ENCODE measurements at regions of chr7 and their contacts with region 1.

Region 1: DNA sequence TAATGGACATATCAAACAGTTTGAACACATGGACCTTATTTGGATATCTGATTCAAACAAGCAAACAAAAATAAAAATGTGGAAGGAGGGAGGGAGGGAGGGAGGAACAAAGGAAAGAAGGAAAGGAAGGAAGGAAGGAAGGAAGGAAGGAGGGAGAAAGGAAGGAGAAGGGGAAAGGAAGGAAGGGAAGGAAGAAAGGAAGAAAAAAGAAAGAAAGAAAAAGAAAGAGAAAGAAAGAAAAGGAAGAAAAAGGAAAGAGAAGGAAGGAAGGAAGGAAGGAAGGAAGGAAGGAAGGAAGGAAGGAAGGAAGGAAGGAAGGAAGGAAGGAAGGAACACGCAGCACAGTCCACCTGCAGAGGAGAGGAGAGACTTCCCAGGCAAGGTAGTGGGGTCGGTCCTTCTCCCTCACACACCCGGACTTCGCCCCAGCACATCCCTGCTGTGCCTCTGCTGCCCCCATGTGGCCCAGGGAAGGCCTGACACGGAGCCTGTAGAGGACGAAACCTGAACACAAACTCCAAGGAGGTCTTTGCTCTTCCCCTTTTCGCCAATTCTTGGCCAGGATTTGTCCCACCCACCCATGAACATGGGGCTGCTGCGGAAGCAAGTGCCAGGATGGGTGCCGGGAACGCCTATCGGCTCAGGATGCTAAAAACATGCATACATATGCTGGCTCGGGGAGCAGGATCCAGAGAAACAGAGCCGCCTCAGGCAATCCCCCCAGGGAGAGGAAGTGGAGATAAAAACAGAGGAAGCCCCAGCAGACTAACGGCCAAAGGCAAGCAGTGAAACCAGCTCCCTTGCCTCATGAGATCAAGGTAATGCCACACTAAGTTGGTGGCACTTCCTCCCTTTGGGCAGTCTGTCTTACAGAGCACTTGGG is 52.3 kb upstream of the DGKI start:
- DNase-seq: peak; percentile 75
- ATAC-seq: peak; percentile 93
- H3K4me3 ChIP-seq: no peak overlapping the region
- H3K27ac ChIP-seq: no peak overlapping the region
- H3K4me1 ChIP-seq: no peaks in the 10 kb centered on the region; the same call in 1 of the 2 replicates
- H3K27me3 ChIP-seq: no peaks in the 10 kb centered on the region
- CTCF ChIP-seq: peak; percentile 85

Region 2: DNA sequence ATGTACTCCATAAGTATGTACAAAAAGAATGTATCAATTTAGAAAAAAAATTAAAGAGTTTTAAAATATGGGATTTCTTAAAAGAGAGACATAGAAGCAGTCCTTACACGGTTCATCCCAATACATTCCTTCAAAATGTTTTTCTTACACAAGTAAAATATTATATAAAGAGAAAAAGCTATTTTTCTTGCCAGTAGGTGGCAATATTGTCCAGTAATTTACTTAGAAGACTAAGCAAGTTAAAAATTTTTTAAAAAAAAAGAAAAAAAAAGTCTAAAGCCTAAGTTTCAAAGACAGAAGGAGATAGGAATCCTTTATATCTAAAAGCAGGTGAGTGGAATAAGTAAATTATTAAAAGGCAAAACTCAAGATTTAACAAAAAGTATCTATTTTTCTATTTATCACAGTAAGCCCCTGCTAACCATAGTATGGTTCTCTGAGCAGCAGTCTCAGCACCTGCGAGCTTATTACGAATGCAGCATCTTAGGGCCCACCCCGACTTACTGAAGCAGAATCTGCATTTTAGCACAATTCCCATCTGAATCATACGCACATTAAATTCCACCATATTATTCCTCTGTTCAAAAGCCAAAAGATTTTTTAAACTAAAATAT is 292.9 kb before region 1 on chr7:
- CTCF ChIA-PET with region 1: no interaction called
- POLR2A ChIA-PET with region 1: no interaction called
- intact Hi-C with region 1: loop called (anchors 1 kb)
- DNase-seq: peak; percentile 80
- ATAC-seq: no peak
- H3K4me3 ChIP-seq: no peak overlapping the region
- H3K27ac ChIP-seq: no peak overlapping the region
- H3K4me1 ChIP-seq: no peaks in the 10 kb centered on the region
- H3K27me3 ChIP-seq: peaks cover 73% of the 10 kb centered on the region
- CTCF ChIP-seq: peak; percentile 58; the same call in 1 of the 2 replicates

Region 3: DNA sequence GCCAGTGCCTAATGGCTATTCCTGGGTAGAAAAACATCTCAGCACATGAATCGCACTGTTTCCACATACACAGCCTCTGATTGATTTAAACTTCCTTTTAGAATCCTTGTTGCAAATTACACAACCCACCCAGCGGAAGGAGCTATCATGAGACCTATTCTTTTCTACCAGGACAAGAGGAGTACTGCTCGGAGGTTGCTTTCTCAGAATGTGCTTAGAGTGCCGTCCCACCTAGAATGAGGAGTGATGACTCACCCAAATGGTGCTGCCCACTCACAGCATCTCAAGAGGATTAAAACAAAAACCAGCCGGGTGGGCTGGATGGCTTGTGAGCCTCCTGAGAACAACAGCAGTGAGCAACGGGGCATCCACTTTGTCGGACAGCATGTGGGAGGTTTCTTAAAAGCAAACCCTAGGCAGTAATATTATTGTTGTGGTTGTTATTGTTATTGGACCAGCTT is 181.2 kb before region 1 on chr7:
- CTCF ChIA-PET with region 1: no interaction called
- POLR2A ChIA-PET with region 1: no interaction called
- intact Hi-C with region 1: no loop called
- DNase-seq: no peak
- ATAC-seq: no peak
- H3K4me3 ChIP-seq: no peak overlapping the region
- H3K27ac ChIP-seq: no peak overlapping the region
- H3K4me1 ChIP-seq: no peaks in the 10 kb centered on the region
- H3K27me3 ChIP-seq: peaks cover 86% of the 10 kb centered on the region
- CTCF ChIP-seq: no peak

Region 4: GRCh38 chr7:137816696-137817320 is 82.3 kb before region 1 on chr7:
- CTCF ChIA-PET with region 1: no interaction called
- POLR2A ChIA-PET with region 1: no interaction called
- intact Hi-C with region 1: loop called (anchors 2 kb)
- DNase-seq: peak; percentile 19
- ATAC-seq: no peak
- H3K4me3 ChIP-seq: no peak overlapping the region
- H3K27ac ChIP-seq: no peak overlapping the region
- H3K4me1 ChIP-seq: no peaks in the 10 kb centered on the region
- H3K27me3 ChIP-seq: peaks cover 53% of the 10 kb centered on the region
- CTCF ChIP-seq: peak; percentile 41; the same call in 1 of the 2 replicates

Region 5: GRCh38 chr7:138002096-138002827 is 103.2 kb after region 1 on chr7:
- CTCF ChIA-PET with region 1: interaction called, 8 read pairs
- POLR2A ChIA-PET with region 1: no interaction called
- intact Hi-C with region 1: loop called (anchors 1 kb)
- DNase-seq: peak; percentile 98
- ATAC-seq: peak; percentile 91
- H3K4me3 ChIP-seq: peak overlapping the region; percentile 95
- H3K27ac ChIP-seq: peak overlapping the region; percentile 76
- H3K4me1 ChIP-seq: peaks cover 26% of the 10 kb centered on the region
- H3K27me3 ChIP-seq: no peaks in the 10 kb centered on the region
- CTCF ChIP-seq: peak; percentile 88

Region 6: GRCh38 chr7:138738551-138739335 is 839.7 kb after region 1 on chr7:
- CTCF ChIA-PET with region 1: no interaction called
- POLR2A ChIA-PET with region 1: no interaction called
- intact Hi-C with region 1: loop called (anchors 2 kb)
- DNase-seq: peak; percentile 88
- ATAC-seq: peak; percentile 98
- H3K4me3 ChIP-seq: no peak overlapping the region
- H3K27ac ChIP-seq: no peak overlapping the region
- H3K4me1 ChIP-seq: no peaks in the 10 kb centered on the region; the same call in 1 of the 2 replicates
- H3K27me3 ChIP-seq: no peaks in the 10 kb centered on the region
- CTCF ChIP-seq: peak; percentile 93

Measured in PC-3 (cell line).